ENCODE measurements at regions of chr1 and their contacts with region 1.

Region 1: GRCh38 chr1:40153073-40153770 is 8.0 kb upstream of the RLF start:
- DNase-seq: no peak
- ATAC-seq: no peak

Region 2: GRCh38 chr1:40315239-40315794 is 162.1 kb after region 1 on chr1:
- intact Hi-C with region 1: loop called in 1 of 2 experiments (anchors 5 kb)
- DNase-seq: peak; percentile 85
- ATAC-seq: peak; percentile 92

Region 3: GRCh38 chr1:40338745-40339424 is 185.7 kb after region 1 on chr1:
- intact Hi-C with region 1: loop called in 1 of 2 experiments (anchors 2 kb)
- DNase-seq: peak; percentile 73
- ATAC-seq: peak; percentile 86 to 89

Region 4: DNA sequence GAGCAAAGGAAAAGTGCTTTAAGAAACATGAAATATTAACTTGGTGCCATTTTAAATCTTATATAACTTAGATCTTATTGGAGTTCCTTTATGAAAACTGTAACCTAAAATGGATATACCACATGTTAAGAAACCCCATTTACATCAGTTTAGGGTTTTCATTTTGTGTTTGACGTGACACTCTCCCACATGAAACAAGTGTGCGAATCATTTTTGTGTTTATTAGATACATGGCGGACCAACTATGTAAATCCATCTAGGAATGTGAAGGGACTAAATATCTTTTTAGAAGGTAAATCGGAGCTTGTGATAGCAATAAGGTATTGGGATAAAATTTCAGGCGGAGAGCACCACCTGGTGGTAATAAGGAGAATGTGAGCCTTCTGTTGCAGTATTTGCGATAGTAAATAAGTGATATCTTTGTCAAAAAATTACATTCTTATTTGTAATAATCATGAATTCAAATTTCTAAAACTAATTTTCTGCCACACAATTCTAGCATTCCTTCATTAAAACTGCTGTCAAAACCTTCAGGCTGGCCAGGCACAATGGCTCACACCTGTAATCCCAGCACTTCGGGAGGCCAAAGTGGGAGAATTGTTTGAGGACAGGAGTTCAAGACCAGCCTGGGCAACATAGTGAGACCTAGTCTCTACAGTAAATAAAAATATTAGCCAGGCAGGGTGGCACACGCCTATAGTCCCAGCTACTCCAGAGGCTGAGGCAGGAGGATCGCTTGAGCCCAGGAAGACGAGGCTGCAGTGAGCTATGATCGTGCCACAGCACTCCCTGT is 251.6 kb after region 1 on chr1:
- intact Hi-C with region 1: loop called in 1 of 2 experiments (anchors 5 kb)
- DNase-seq: no peak
- ATAC-seq: peak in 1 of 2 donors; percentile 47

Measured in left cardiac atrium (tissue), 4 donors.